SK-MEL-5 (cell line): ENCODE measurements at regions of chr7 and their contacts with region 1.

Region 1: GRCh38 chr7:128954830-128955802 is 17.4 kb downstream of the IRF5 start:
- DNase-seq: no peak

Region 2: GRCh38 chr7:129017933-129018538 is 62.9 kb after region 1 on chr7:
- in situ Hi-C with region 1: loop called (anchors 10 kb)
- DNase-seq: no peak

Region 3: GRCh38 chr7:129271500-129272355 is 316.6 kb after region 1 on chr7:
- in situ Hi-C with region 1: no loop called
- DNase-seq: peak; percentile 92